Vagina (tissue), 2 donors: ENCODE measurements at regions of chr19 and their contacts with region 1.

Region 1: GRCh38 chr19:46283771-46284170 is 13.1 kb upstream of the HIF3A start:
- DNase-seq: no peak
- H3K4me3 ChIP-seq: no peak overlapping the region
- H3K27ac ChIP-seq: no peak overlapping the region
- H3K4me1 ChIP-seq: no peaks in the 10 kb centered on the region
- H3K27me3 ChIP-seq: no peaks in the 10 kb centered on the region
- CTCF ChIP-seq: no peak
- POLR2A ChIP-seq: no peak

Region 2: GRCh38 chr19:46346821-46347571 is 63.2 kb after region 1 on chr19 and contains the start of gene PPP5C:
- intact Hi-C with region 1: loop called (anchors 5 kb)
- DNase-seq: no peak
- H3K4me3 ChIP-seq: peak within 1 kb of the TSS; percentile 84
- H3K27ac ChIP-seq: peak within 1 kb of the TSS; percentile 84
- H3K4me1 ChIP-seq: peaks cover 53% of the 10 kb centered on the region
- H3K27me3 ChIP-seq: no peaks in the 10 kb centered on the region
- CTCF ChIP-seq: peak; percentile 26 to 43 (median 31)
- POLR2A ChIP-seq: peak in 1 of 2 donors; percentile 77
- total RNA-seq, gene PPP5C: 60.4 TPM

Region 3: GRCh38 chr19:46392243-46392801 is 108.6 kb after region 1 on chr19:
- intact Hi-C with region 1: loop called (anchors 5 kb)
- DNase-seq: no peak
- H3K4me3 ChIP-seq: no peak overlapping the region
- H3K27ac ChIP-seq: peak overlapping the region; percentile 14
- H3K4me1 ChIP-seq: peaks cover 8% of the 10 kb centered on the region
- H3K27me3 ChIP-seq: no peaks in the 10 kb centered on the region
- CTCF ChIP-seq: no peak
- POLR2A ChIP-seq: no peak